CD4-positive, alpha-beta T cell (primary cell): ENCODE measurements at regions of chr3 and their contacts with region 1.

Region 1: GRCh38 chr3:195411836-195412235 is 31.0 kb downstream of the ACAP2 start:
- DNase-seq: no peak
- ATAC-seq: no peak
- H3K4me3 ChIP-seq: no peak overlapping the region
- H3K4me3 Mint-ChIP-seq: no peak overlapping the region
- H3K27ac ChIP-seq: no peak overlapping the region
- H3K27ac Mint-ChIP-seq: no peak overlapping the region
- H3K4me1 ChIP-seq: peaks cover 11% of the 10 kb centered on the region
- H3K4me1 Mint-ChIP-seq: peaks cover 66% of the 10 kb centered on the region
- H3K27me3 ChIP-seq: no peaks in the 10 kb centered on the region
- H3K27me3 Mint-ChIP-seq: no peaks in the 10 kb centered on the region
- CTCF ChIP-seq: no peak

Region 2: GRCh38 chr3:195319060-195319459 is 92.8 kb before region 1 on chr3:
- CTCF ChIA-PET with region 1: no interaction called
- POLR2A ChIA-PET with region 1: no interaction called
- intact Hi-C with region 1: loop called in 1 of 2 experiments (anchors 10 kb)
- DNase-seq: no peak
- ATAC-seq: no peak
- H3K4me3 ChIP-seq: no peak overlapping the region
- H3K4me3 Mint-ChIP-seq: no peak overlapping the region
- H3K27ac ChIP-seq: no peak overlapping the region
- H3K27ac Mint-ChIP-seq: no peak overlapping the region
- H3K4me1 ChIP-seq: no peaks in the 10 kb centered on the region
- H3K4me1 Mint-ChIP-seq: peaks cover 23% of the 10 kb centered on the region
- H3K27me3 ChIP-seq: no peaks in the 10 kb centered on the region
- H3K27me3 Mint-ChIP-seq: no peaks in the 10 kb centered on the region
- CTCF ChIP-seq: no peak